Lower leg skin (tissue), 4 donors: ENCODE measurements at regions of chr3 and their contacts with region 1.

Region 1: GRCh38 chr3:98329392-98330124 is 24.1 kb upstream of the OR5K4 start:
- DNase-seq: peak in 1 of 2 donors; percentile 26
- H3K4me3 ChIP-seq: no peak overlapping the region
- CTCF ChIP-seq: no peak
- POLR2A ChIP-seq: no peak

Region 2: DNA sequence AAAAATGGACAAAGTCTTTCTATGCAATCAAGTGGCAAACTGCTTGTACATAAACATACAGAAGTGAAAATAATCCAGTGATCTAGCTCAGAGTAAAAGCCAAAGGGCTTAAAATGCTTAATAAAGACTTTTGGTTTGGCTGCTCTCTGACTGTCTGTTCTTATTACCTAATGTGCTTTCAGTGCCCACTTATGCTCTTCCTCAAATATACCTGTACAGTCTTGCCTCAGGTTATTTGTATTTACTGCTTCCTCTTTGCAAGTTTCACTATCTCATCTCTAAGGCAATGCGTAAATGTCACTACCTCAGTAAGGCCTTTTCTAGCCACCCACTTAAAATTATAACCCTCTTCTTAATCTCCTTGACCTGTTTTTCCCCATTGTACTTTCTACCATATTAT is 1343.3 kb before region 1 on chr3:
- intact Hi-C with region 1: no loop called
- DNase-seq: no peak
- H3K4me3 ChIP-seq: no peak overlapping the region
- CTCF ChIP-seq: no peak
- POLR2A ChIP-seq: no peak

Region 3: DNA sequence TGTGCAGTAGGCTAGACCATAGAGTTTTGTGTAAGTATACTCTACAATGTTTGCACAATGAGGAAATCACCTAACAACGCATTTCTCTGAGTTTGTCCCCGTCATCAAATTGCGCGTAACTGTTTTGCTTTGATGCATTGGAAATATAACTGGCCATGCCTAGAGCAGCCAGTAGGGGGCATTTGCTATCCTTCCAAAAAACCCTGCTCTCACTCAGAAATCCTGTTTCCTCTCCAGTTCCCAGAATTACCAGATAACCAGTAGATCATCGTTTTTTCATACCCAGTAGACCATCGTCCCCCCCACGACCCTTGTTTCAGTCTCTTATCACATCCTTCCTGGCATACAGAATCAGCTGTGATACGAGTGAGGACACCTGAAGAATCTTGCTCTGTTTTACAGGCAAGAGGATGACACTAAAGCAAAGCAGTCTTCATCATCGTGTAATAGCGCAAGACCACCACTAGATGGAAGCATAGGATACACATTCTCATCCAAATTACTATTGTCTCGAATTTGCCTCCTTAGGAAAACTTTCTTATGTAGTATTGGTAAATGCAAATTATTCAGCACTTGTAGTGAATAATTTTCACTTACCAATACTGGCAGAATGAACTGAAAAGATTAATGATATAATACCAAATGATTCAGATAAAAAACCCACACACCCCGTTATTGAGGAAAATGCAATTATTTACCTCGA is 290.1 kb before region 1 on chr3:
- intact Hi-C with region 1: loop called (anchors 10 kb)
- DNase-seq: peak in 1 of 2 donors; percentile 76
- H3K4me3 ChIP-seq: no peak overlapping the region
- CTCF ChIP-seq: peak in 1 of 3 donors; percentile 85
- POLR2A ChIP-seq: no peak